ENCODE measurements at regions of chr11 and their contacts with region 1.

Region 1: GRCh38 chr11:59171508-59172322 is at the start of gene DTX4:
- DNase-seq: peak; percentile 80 to 92
- H3K4me3 ChIP-seq: peak within 1 kb of the TSS; percentile 96
- H3K27ac ChIP-seq: peak within 1 kb of the TSS; percentile 85
- H3K4me1 ChIP-seq: peaks cover 28% of the 10 kb centered on the region
- H3K27me3 ChIP-seq: no peaks in the 10 kb centered on the region
- CTCF ChIP-seq: peak; percentile 93
- total RNA-seq, gene DTX4: 28.4 and 34.5 TPM in 2 replicates

Region 2: DNA sequence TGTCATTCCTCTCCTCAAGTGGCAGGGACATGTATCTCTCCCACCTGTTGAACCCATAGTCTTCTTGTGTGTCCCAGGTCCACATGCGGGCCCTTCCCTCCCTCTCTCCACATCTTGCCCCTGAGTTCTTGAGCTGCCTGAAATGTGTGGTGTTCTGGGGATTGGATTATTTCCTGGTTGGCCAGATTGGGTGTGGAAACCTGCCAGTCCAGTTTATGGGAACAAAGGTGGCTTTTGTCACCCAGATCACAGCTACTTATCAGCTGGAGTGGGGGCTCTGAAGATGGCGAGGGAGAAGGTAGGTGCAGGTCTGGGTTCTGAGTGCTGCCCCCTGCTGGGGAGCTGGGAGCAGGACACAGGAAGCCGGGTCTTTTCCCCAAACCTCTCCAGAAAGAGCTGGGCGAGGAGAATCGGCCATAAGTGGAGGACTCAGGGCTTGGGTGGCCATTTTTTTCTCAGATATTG is 14.4 kb after region 1 on chr11:
- CTCF ChIA-PET with region 1: interaction called, 67 read pairs
- POLR2A ChIA-PET with region 1: interaction called, 7 read pairs
- intact Hi-C with region 1: loop called (anchors 1 kb)
- DNase-seq: peak; percentile 88 to 98
- H3K4me3 ChIP-seq: peak overlapping the region; percentile 52
- H3K27ac ChIP-seq: peak overlapping the region; percentile 81
- H3K4me1 ChIP-seq: peaks cover 84% of the 10 kb centered on the region
- H3K27me3 ChIP-seq: no peaks in the 10 kb centered on the region
- CTCF ChIP-seq: peak; percentile 98

Region 3: GRCh38 chr11:59247531-59248227 is 76.0 kb after region 1 on chr11:
- CTCF ChIA-PET with region 1: no interaction called
- POLR2A ChIA-PET with region 1: no interaction called
- intact Hi-C with region 1: no loop called
- DNase-seq: peak; percentile 56 to 95
- H3K4me3 ChIP-seq: no peak overlapping the region
- H3K27ac ChIP-seq: peak overlapping the region; percentile 33
- H3K4me1 ChIP-seq: peaks cover 20% of the 10 kb centered on the region
- H3K27me3 ChIP-seq: no peaks in the 10 kb centered on the region
- CTCF ChIP-seq: no peak

Region 4: GRCh38 chr11:59263225-59263894 is 91.6 kb after region 1 on chr11:
- CTCF ChIA-PET with region 1: interaction called, 8 read pairs
- POLR2A ChIA-PET with region 1: no interaction called
- intact Hi-C with region 1: loop called (anchors 1 kb)
- DNase-seq: peak in 1 of 2 experiments; percentile 52
- H3K4me3 ChIP-seq: no peak overlapping the region
- H3K27ac ChIP-seq: no peak overlapping the region
- H3K4me1 ChIP-seq: peaks cover 29% of the 10 kb centered on the region
- H3K27me3 ChIP-seq: no peaks in the 10 kb centered on the region
- CTCF ChIP-seq: peak; percentile 73

Region 5: DNA sequence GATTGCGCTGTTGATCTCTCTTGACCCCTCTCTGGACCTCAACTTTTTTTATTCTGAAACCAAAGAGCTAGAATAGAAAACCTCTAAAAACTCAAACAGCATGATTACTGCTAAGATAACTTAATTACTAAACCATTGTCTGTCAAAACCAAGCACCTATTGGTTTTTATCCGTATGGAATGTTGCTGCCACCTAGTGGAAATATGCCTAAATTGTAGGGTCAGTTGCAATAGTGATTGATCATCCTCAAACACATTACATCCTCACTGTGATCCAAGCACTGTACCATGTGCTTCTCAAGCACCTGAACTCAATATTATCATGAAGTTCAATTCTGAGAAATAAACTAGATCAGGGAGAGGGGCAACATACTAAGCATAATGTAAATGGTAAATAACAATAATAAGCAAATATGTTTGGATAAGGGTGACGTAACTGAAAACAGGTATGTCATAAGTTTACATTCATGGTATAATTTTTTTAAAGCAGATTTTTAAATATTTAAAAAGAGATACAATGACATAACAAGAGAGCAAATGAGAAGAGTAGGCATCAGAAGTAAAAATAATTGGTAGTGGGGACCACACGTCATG is 258.3 kb after region 1 on chr11:
- CTCF ChIA-PET with region 1: no interaction called
- POLR2A ChIA-PET with region 1: no interaction called
- intact Hi-C with region 1: loop called (anchors 1 kb)
- DNase-seq: peak; percentile 11 to 62
- H3K4me3 ChIP-seq: no peak overlapping the region
- H3K27ac ChIP-seq: no peak overlapping the region
- H3K4me1 ChIP-seq: no peaks in the 10 kb centered on the region
- H3K27me3 ChIP-seq: no peaks in the 10 kb centered on the region
- CTCF ChIP-seq: peak; percentile 94

Region 6: GRCh38 chr11:59555601-59556114 is 383.9 kb after region 1 on chr11:
- CTCF ChIA-PET with region 1: interaction called, 3 read pairs
- POLR2A ChIA-PET with region 1: interaction called, 20 read pairs
- intact Hi-C with region 1: loop called (anchors 5 kb)
- DNase-seq: no peak
- H3K4me3 ChIP-seq: peak overlapping the region; percentile 62
- H3K27ac ChIP-seq: peak overlapping the region; percentile 82
- H3K4me1 ChIP-seq: peaks cover 19% of the 10 kb centered on the region
- H3K27me3 ChIP-seq: no peaks in the 10 kb centered on the region
- CTCF ChIP-seq: no peak

Measured in PC-9 (cell line).